CD8-positive, alpha-beta T cell (primary cell): ENCODE measurements at regions of chr18 and their contacts with region 1.

Region 1: DNA sequence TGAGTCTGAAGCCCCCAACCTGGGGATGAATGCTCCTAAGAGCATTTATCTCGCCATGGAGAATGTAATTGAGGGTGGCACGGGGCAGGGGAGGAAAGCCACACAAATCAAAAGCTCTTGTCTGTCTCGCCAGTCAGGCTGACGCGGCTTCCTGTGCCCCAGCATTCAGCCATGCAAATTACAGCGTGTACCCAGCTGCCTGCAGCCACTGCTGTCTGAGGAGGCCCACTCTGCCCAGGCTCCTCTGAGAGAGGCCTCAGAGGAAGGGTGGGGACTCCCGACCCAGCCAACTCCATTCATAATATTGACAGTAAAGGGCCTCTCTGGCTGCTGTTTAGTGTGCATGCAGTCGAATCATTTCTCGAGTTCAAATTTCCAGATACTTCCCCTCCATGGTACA is 22.0 kb downstream of the SMAD7 start:
- DNase-seq: peak; percentile 60 to 91 (median 83)
- ATAC-seq: peak; percentile 92
- H3K4me3 ChIP-seq: no peak overlapping the region
- H3K4me3 Mint-ChIP-seq: peak overlapping the region; percentile 69
- H3K27ac ChIP-seq: peak overlapping the region in 1 of 2 experiments; percentile 70
- H3K27ac Mint-ChIP-seq: peak overlapping the region; percentile 91
- H3K4me1 ChIP-seq: peaks cover 67% of the 10 kb centered on the region
- H3K4me1 Mint-ChIP-seq: peaks cover 92% of the 10 kb centered on the region
- H3K27me3 ChIP-seq: no peaks in the 10 kb centered on the region
- H3K27me3 Mint-ChIP-seq: no peaks in the 10 kb centered on the region
- CTCF ChIP-seq: no peak

Region 2: GRCh38 chr18:48975649-48976204 is 46.9 kb after region 1 on chr18:
- CTCF ChIA-PET with region 1: no interaction called
- POLR2A ChIA-PET with region 1: no interaction called
- intact Hi-C with region 1: loop called in 1 of 2 experiments (anchors 10 kb)
- DNase-seq: peak in 8 of 9 experiments; percentile 28 to 77 (median 58)
- ATAC-seq: peak; percentile 77
- H3K4me3 ChIP-seq: peak overlapping the region; percentile 48 to 50
- H3K4me3 Mint-ChIP-seq: peak overlapping the region; percentile 59
- H3K27ac ChIP-seq: no peak overlapping the region
- H3K27ac Mint-ChIP-seq: no peak overlapping the region
- H3K4me1 ChIP-seq: peaks cover 11% of the 10 kb centered on the region
- H3K4me1 Mint-ChIP-seq: peaks cover 7% of the 10 kb centered on the region
- H3K27me3 ChIP-seq: no peaks in the 10 kb centered on the region
- H3K27me3 Mint-ChIP-seq: peaks cover 29% of the 10 kb centered on the region
- CTCF ChIP-seq: no peak

Region 3: DNA sequence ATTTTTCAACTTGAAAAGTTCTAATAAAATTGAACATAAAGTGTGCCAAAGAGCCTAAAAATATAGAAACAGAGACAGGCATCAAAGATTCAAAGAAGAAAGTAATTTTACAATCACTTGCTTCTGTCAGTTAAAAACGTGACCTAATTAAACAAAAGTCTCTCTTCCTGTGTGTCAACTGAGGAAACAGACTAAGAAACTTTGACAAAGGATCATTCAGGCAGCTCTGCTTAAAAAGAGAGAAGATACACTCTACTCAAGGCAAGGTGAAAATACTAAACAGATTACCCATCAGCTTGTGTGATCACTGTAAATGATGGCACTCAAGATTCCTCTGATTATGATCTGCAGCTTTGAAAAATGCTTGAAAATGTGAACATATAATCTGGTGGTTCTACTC is 483.9 kb after region 1 on chr18:
- CTCF ChIA-PET with region 1: no interaction called
- POLR2A ChIA-PET with region 1: no interaction called
- intact Hi-C with region 1: loop called in 1 of 2 experiments (anchors 10 kb)
- DNase-seq: no peak
- ATAC-seq: peak; percentile 23
- H3K4me3 ChIP-seq: no peak overlapping the region
- H3K4me3 Mint-ChIP-seq: peak overlapping the region; percentile 13
- H3K27ac ChIP-seq: no peak overlapping the region
- H3K27ac Mint-ChIP-seq: peak overlapping the region; percentile 87
- H3K4me1 ChIP-seq: peaks cover 20% of the 10 kb centered on the region
- H3K4me1 Mint-ChIP-seq: peaks cover 46% of the 10 kb centered on the region
- H3K27me3 ChIP-seq: no peaks in the 10 kb centered on the region
- H3K27me3 Mint-ChIP-seq: no peaks in the 10 kb centered on the region
- CTCF ChIP-seq: no peak